Cardiac septum (tissue), 1 donor: ENCODE measurements at regions of chr4 and their contacts with region 1.

Region 1: DNA sequence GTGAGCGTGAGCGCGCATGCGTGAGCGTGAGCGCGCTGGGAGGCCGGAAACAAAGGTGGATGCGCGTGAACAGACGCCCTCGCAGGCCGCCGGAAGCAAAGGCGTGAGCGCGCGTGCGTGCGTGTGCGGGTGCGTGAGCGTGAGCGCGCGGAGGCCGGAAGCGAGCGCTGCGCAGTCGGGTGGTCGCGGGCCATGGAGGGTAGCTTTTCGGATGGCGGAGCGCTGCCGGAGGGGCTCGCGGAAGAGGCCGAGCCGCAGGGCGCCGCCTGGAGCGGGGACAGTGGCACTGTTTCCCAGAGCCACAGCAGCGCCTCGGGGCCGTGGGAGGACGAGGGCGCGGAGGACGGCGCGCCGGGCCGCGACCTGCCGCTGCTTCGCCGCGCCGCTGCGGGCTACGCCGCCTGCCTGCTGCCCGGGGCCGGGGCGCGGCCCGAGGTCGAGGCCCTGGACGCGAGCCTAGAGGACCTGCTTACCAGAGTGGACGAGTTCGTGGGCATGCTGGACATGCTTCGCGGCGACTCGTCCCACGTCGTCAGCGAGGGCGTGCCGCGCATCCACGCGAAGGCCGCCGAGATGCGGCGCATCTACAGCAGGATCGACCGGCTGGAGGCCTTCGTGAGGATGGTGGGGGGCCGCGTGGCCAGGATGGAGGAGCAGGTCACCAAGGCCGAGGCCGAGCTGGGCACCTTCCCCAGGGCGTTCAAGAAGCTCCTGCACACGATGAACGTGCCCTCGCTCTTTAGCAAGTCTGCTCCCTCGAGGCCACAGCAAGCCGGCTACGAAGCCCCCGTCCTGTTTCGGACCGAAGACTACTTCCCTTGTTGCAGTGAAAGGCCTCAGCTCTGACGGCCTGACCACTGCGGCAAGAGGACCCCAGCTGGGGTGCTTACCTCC is at the start of gene BLOC1S4:
- DNase-seq: peak; percentile 92
- total RNA-seq, gene BLOC1S4: 7.5 TPM

Region 2: DNA sequence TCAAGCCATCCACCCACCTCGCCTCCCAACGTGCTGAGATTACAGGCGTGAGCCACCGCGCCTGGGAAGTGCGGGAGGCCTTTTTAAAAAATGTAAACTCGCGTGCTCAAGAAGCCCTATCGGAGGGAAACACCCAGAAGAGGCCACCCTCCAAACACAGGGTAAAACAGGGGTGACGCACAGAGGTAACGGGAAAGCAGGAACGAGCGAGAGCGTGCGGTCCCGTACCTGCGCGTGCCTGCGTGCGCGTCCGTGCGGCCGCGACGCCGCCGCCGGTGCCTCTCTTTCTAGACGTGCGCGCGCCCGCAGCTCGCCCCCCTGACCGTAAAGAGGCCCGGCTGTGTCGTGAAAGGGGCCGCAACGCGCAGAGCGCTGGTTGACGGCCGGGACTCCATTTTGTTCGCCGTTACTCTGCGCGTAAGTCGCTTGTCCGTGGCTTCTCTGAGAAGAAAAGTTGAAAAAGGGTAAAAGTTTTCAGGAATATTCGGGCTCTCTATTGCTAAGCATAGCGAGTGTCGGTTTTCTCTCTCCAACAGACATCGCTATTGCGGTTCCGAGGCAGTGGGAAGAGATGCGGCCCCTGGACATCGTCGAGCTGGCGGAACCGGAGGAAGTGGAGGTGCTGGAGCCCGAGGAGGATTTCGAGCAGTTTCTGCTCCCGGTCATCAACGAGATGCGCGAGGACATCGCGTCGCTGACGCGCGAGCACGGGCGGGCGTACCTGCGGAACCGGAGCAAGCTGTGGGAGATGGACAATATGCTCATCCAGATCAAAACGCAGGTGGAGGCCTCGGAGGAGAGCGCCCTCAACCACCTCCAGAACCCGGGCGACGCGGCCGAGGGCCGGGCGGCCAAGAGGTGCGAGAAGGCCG is 75.7 kb before region 1 on chr4 and contains the start of gene MRFAP1:
- intact Hi-C with region 1: loop called (anchors 1 kb)
- DNase-seq: peak; percentile 97
- total RNA-seq, gene MRFAP1: 262 TPM

Region 3: GRCh38 chr4:6848717-6849305 is 132.5 kb after region 1 on chr4:
- intact Hi-C with region 1: no loop called
- DNase-seq: no peak

Region 4: DNA sequence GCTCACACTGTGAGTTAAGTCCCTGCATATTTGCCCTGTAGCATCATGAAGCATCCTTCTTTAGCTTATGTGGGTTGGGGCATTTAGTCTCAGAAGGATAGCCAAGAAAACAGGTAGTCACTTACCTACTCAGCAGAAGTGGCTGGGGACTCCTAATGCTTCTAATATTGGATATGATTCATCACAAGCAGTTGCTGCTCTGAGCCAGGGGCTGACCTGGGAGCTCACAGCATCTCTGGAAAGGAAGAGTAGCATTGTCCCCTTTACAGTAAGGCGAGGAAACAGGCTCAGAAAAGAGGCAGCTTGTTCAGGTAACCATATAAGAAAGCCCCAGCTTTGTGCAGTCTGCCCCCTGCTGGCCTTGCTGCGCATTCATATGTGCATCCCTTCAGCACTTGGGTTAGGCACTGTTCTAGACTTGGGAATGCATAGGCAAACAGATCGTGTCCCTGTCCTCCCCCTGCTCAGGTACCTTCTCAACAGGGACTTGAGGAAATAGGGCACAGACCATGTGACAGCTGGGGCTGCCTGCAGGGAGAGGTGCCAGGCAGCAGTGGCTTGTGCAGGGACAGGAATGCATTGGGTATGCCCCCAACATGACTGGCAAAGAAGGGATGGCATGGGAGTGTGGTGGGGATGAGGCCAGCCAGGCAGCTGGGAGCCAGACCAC is 157.7 kb after region 1 on chr4:
- intact Hi-C with region 1: loop called (anchors 1 kb)
- DNase-seq: peak; percentile 88

Region 5: DNA sequence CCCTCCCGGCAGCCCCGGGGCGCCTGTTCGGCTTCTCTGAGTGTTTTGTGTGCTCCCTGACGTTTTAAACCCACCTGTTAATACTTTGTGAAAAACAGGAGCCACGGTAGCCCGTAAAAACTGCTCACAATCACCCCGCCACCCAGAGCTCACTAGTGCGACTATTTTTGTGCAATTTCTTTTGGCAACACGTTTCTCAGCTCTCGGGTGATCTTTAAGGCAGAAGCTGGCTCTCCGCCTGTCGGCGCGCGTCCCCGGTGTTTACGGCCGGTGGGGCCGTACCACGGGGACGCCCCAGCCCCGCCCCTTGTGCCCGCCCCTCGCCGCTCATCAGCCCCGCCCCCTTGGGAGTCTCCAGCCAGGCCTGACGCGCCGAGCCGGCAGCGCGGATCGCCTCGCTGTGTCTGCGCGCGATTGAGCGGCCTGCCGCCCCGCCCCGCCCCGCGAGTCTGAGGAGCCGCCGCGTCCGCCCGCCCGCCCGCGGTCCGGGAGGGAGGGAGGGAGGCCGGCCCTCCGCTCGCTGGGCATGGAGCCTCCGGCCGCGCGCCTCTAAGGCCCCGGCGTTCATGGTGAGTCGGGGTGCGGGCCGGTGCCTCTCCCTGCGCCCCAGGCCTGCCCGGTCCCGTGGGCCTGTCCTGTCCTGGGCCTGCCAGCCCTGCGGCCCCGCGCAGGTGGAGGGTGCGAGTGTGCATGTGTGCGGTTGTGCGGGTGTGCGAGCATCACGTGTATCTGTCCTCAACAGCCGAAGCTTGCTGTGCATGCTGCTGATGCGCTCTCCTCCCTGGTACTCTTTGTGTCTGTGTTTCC is 270.7 kb after region 1 on chr4:
- intact Hi-C with region 1: loop called (anchors 5 kb)
- DNase-seq: peak; percentile 99

Region 6: DNA sequence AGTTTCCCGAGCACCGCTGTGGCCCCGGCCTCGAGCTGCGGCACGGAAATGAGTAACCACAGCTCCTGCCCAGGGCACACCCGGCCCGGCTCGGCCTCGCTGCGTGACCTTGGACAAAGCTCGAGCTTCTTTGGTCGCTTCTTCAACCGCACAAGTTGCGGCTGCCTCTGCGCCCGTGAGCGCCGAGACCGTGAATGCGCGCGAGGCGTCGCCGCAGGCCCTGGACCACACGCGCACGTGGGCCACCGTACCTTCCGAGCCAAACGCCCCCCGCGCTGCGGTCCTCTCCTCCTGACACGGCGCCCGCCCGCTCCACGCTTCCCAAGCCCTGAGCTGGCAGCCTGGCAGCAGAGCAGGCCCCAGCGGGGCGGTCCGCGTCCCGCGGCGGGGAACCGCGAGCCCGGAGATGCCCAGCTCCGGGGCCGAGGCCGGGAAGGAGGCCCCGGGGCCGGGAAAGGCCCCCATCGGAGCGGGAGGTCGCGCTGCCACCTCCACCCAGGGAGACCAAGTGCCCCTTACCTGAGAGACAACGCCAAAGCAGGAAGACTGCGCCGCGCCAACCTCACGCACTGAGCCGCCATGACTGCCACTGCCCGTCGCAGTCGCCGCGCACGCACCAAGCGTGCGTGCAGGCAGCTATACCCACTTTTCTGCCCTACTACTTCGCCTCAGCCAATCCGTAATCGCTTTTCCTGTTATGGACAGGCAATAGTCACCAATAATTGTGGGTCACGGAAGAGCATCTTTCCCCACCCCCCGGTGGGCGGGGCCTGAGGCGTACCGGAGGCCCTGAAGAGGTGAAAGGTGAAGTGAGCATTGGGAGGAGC is 351.4 kb after region 1 on chr4 and contains the start of gene GRPEL1:
- intact Hi-C with region 1: loop called (anchors 1 kb)
- DNase-seq: no peak
- total RNA-seq, gene GRPEL1: 43.5 TPM